Mammary epithelial cell (primary cell): ENCODE measurements at regions of chr14 and their contacts with region 1.

Region 1: DNA sequence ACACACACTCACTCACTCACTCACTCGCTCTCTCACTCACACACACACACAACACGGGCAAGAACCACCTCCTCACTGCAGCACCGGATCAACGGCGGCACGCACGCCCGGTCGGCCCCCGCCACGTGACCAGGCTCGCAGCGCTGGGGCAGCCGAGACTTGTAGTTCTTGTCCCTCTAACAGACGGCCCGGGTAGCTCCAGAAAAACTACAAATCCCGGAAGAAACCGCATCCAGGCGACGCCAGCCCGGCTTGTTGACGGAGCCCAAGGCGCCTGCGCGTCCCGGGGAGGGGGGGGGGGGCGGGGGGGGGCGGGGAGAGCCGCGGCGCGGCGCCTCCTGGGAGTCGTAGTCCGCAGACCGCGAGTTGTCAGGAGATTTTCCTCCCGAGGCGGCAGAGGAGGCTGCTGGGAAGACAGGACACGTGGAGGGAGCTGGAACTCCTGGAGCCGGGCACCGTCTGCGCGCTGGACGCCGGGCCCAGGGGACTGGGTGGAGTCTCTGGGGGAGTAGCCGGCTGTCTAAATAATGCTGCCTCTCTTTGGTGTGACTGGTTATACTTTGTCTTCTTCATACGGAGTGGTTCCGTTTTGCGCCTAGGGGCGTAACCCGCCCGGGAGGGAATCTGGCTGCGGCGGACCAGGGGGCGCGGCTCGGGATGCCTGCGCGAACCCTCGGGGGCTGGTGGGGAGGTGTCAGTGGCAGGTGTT is at the start of gene MAX:
- DNase-seq: peak; percentile 98
- H3K4me3 ChIP-seq: peak within 1 kb of the TSS; percentile 89 to 96 (median 92)
- H3K27ac ChIP-seq: peak within 1 kb of the TSS; percentile 65
- H3K4me1 ChIP-seq: peaks cover 11% of the 10 kb centered on the region
- H3K27me3 ChIP-seq: no peaks in the 10 kb centered on the region
- CTCF ChIP-seq: no peak
- total RNA-seq, gene MAX: 36.0 to 84.7 TPM

Region 2: DNA sequence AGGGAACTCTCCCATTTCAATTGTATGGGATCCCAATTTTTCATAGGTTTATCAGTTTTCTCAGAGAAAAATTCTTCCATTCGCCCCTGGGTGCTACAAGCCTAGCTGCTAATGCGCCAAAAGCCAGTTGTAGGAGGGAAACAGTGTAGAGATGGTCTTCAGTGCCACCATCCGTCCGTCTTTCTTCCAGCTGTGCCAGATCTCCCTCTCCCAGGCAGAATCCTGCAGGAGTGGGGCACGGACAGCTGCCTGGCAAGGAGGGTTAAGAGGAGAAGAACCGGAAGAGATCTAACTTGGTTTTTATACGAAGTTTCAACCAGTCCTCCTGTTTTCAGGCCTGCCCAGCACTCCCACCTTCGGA is 271.1 kb after region 1 on chr14:
- CTCF ChIA-PET with region 1: no interaction called
- dilution Hi-C with region 1: no loop called
- in situ Hi-C with region 1: no loop called
- intact Hi-C with region 1: loop called (anchors 5 kb)
- DNase-seq: peak; percentile 24
- H3K4me3 ChIP-seq: peak overlapping the region in 2 of 3 experiments; percentile 21 to 36
- H3K27ac ChIP-seq: no peak overlapping the region
- H3K4me1 ChIP-seq: peaks cover 3% of the 10 kb centered on the region
- H3K27me3 ChIP-seq: no peaks in the 10 kb centered on the region
- CTCF ChIP-seq: peak in 1 of 2 donors; percentile 34